Caco-2 (cell line): ENCODE measurements at regions of chr2 and their contacts with region 1.

Region 1: DNA sequence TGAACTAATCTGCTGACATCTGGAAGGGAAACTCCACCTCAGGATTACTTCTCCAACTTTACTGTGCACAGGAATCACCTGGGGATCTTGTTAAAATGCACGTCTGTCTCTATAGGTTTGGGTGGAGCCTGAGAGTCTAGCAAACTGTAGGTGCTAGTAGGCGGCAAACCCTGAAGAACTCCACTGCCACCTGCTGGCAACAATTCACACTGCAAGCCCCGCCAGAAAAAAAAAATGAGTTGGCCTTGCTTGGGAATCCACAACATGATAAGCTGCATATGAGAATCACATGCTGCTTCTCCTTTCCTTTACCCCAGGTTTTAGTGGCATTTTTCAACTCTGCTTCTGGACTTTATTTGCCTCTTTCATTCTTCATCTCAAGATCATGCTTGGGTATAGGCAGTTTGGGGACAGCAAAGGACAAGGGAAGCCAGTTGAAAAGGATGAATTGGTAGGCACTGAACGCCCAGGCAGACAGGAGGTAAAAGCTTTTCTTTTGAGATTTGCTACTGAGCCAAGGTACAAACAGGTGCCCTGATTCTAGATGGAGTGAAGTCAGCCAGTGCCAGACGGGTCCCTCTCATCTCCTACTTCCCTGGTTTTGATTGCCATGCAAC is 88.8 kb downstream of the VIT start:
- DNase-seq: peak; percentile 68 to 88
- H3K4me3 ChIP-seq: no peak overlapping the region
- H3K4me3 Mint-ChIP-seq: no peak overlapping the region
- H3K27ac Mint-ChIP-seq: no peak overlapping the region
- H3K4me1 ChIP-seq: no peaks in the 10 kb centered on the region
- H3K4me1 Mint-ChIP-seq: no peaks in the 10 kb centered on the region
- H3K27me3 ChIP-seq: no peaks in the 10 kb centered on the region
- H3K27me3 Mint-ChIP-seq: peaks cover 10% of the 10 kb centered on the region
- CTCF ChIP-seq: peak; percentile 95 to 96

Region 2: GRCh38 chr2:35871672-35872071 is 913.6 kb before region 1 on chr2:
- CTCF ChIA-PET with region 1: no interaction called
- POLR2A ChIA-PET with region 1: no interaction called
- intact Hi-C with region 1: loop called (anchors 10 kb)
- DNase-seq: peak in 1 of 2 experiments; percentile 25
- H3K4me3 ChIP-seq: no peak overlapping the region
- H3K4me3 Mint-ChIP-seq: no peak overlapping the region
- H3K27ac Mint-ChIP-seq: no peak overlapping the region
- H3K4me1 ChIP-seq: no peaks in the 10 kb centered on the region
- H3K4me1 Mint-ChIP-seq: no peaks in the 10 kb centered on the region
- H3K27me3 ChIP-seq: no peaks in the 10 kb centered on the region
- H3K27me3 Mint-ChIP-seq: no peaks in the 10 kb centered on the region
- CTCF ChIP-seq: peak; percentile 64 to 66

Region 3: GRCh38 chr2:36561237-36561944 is 223.9 kb before region 1 on chr2:
- CTCF ChIA-PET with region 1: no interaction called
- POLR2A ChIA-PET with region 1: no interaction called
- intact Hi-C with region 1: loop called (anchors 5 kb)
- DNase-seq: peak in 1 of 2 experiments; percentile 54
- H3K4me3 ChIP-seq: no peak overlapping the region
- H3K4me3 Mint-ChIP-seq: peak overlapping the region; percentile 35
- H3K27ac Mint-ChIP-seq: peak overlapping the region; percentile 89
- H3K4me1 ChIP-seq: peaks cover 54% of the 10 kb centered on the region
- H3K4me1 Mint-ChIP-seq: peaks cover 38% of the 10 kb centered on the region
- H3K27me3 ChIP-seq: no peaks in the 10 kb centered on the region
- H3K27me3 Mint-ChIP-seq: no peaks in the 10 kb centered on the region
- CTCF ChIP-seq: no peak

Region 4: GRCh38 chr2:36800381-36800780 is 15.1 kb after region 1 on chr2:
- CTCF ChIA-PET with region 1: interaction called, 11 read pairs
- POLR2A ChIA-PET with region 1: no interaction called
- intact Hi-C with region 1: no loop called
- DNase-seq: no peak
- H3K4me3 ChIP-seq: no peak overlapping the region
- H3K4me3 Mint-ChIP-seq: no peak overlapping the region
- H3K27ac Mint-ChIP-seq: no peak overlapping the region
- H3K4me1 ChIP-seq: no peaks in the 10 kb centered on the region
- H3K4me1 Mint-ChIP-seq: no peaks in the 10 kb centered on the region
- H3K27me3 ChIP-seq: no peaks in the 10 kb centered on the region
- H3K27me3 Mint-ChIP-seq: peaks cover 17% of the 10 kb centered on the region
- CTCF ChIP-seq: no peak

Region 5: DNA sequence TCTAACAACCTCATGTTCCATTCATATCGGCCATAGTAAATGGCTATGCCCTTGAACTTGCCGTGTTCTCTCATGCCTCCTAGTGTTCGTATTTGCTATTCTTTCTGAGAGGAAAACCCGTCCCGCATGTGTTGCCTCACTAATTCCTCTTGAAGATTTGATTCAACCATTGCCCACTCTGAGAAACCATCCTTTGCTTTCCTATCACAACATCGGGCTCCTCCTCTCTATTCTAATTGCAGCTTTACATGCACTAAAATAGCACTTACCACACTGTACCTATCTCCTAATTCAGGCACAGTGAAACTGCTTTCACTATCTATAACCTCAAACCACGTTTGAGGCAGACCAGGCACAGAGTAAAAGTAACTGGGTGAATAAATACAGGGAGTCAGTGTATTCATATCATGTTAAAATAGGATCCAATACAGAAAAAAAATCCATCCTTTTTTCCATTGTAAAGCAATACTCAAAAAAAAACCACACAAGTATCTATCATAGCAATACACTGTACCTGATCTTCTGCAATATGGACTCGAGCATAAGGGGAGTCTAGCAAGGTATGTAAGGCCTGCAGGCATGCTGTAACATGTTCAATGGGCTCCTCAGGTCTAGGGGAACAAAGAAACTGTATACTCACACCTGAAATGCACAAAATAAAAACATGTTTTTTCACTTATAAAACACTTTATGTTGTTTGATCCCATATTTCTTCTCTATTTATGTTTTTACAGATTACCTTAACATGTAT is 220.0 kb after region 1 on chr2:
- CTCF ChIA-PET with region 1: no interaction called
- POLR2A ChIA-PET with region 1: no interaction called
- intact Hi-C with region 1: loop called (anchors 1 kb)
- DNase-seq: peak in 1 of 2 experiments; percentile 56
- H3K4me3 ChIP-seq: no peak overlapping the region
- H3K4me3 Mint-ChIP-seq: no peak overlapping the region
- H3K27ac Mint-ChIP-seq: no peak overlapping the region
- H3K4me1 ChIP-seq: no peaks in the 10 kb centered on the region
- H3K4me1 Mint-ChIP-seq: no peaks in the 10 kb centered on the region
- H3K27me3 ChIP-seq: no peaks in the 10 kb centered on the region
- H3K27me3 Mint-ChIP-seq: no peaks in the 10 kb centered on the region
- CTCF ChIP-seq: peak; percentile 55 to 59

Region 6: DNA sequence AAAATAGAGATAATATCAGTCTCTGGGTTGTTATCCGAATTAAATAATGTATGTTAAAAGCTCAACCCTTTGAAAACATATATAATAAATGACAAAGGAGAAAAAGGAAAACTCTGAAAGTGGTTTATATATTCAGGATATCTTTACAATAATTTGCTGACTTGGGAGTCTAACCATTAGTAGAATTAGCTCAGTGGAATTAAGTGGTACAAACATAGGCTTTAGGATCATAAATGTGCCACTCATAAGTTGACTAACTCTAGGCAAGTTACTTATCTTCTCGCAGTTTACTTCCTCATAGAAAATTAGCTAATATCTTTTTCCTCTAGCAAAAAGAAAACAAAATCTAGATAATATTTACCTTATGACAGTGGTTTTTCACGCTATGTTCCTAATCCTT is 254.3 kb after region 1 on chr2:
- CTCF ChIA-PET with region 1: interaction called, 10 read pairs
- POLR2A ChIA-PET with region 1: no interaction called
- intact Hi-C with region 1: no loop called
- DNase-seq: no peak
- H3K4me3 ChIP-seq: no peak overlapping the region
- H3K4me3 Mint-ChIP-seq: no peak overlapping the region
- H3K27ac Mint-ChIP-seq: no peak overlapping the region
- H3K4me1 ChIP-seq: no peaks in the 10 kb centered on the region
- H3K4me1 Mint-ChIP-seq: no peaks in the 10 kb centered on the region
- H3K27me3 ChIP-seq: no peaks in the 10 kb centered on the region
- H3K27me3 Mint-ChIP-seq: no peaks in the 10 kb centered on the region
- CTCF ChIP-seq: no peak